Dendritic cell treated with granulocyte-macrophage colony-stimulating factor and Interleukin-4, amounts not matched to agents 40 ng/mL and 50 ng/mL, for 4 days (primary cell): ENCODE measurements at regions of chr13 and their contacts with region 1.

Region 1: DNA sequence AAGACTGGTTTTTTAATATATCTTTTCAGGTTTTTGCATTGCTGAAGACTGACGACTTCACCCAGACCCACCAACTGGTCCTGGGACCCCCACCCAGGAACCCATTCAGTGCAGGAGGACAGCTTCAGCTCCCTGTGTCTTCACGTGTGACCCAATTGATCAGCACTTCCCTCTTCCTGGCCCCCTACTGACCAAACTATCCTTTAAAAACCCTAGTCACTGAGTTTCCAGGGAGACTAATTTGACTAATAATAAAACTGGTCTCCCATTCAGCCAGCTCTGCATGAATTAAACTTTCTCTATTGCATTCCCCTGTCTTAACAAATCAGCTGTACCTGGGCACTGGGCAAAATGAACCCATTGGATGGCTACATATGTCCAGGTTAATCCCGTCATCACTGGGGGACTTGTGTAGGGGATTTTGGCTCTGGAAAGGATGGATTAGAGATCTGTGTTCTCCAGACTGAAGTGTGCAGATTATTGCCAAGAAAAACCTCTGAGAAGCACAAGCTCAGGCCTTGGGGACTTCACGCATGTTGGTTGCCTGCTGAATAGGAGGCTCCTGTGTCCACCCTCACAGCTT is 16.3 kb upstream of the PARP4 start:
- H3K4me3 Mint-ChIP-seq: no peak overlapping the region
- H3K27ac Mint-ChIP-seq: no peak overlapping the region
- H3K4me1 Mint-ChIP-seq: no peaks in the 10 kb centered on the region
- H3K27me3 Mint-ChIP-seq: peaks cover 25% of the 10 kb centered on the region

Region 2: GRCh38 chr13:24784319-24784718 is 255.4 kb after region 1 on chr13:
- intact Hi-C with region 1: no loop called
- H3K4me3 Mint-ChIP-seq: no peak overlapping the region
- H3K27ac Mint-ChIP-seq: no peak overlapping the region
- H3K4me1 Mint-ChIP-seq: no peaks in the 10 kb centered on the region
- H3K27me3 Mint-ChIP-seq: no peaks in the 10 kb centered on the region

Region 3: DNA sequence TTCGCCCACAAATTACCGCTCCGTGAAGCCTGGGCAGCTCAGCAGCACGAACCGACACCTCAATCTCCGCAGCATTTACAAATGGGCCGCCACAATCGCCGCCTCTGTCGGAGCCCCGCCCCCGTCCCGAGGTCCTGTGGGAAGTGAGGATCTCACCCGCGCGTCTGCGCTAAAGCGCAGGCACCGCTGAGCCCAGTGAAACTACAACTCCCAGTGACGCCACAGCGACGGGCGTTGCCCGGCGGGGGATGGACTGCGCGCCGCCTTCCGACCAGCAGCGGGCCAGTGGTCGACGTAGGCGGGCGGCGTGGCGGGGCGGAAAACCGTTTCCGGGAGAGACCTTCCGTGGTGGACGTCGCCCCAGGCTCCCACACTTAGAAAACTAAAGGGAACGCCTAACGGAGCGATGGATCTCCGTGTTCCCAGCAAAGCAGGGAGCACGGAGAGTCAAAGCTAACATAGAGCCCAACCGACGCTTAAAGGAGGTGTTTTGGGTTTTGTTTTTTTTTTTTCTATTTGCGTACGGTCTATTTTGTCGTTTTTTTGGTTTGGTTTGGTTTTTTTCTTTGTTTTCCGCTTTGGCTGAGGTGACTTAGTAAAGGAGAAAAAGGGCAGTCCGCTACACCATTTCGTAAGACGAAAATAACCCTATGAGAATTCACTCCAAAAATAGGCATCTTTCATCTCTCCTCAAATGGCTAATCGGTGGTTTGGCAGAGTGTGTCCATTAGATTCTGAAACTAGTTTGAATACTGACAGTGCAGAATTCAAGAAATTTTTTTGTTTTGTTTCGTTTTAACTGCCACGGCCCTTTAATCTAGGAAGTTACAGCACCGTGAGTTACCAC is 394.1 kb after region 1 on chr13:
- intact Hi-C with region 1: loop called (anchors 10 kb)
- H3K4me3 Mint-ChIP-seq: peak overlapping the region; percentile 99
- H3K27ac Mint-ChIP-seq: peak overlapping the region; percentile 99
- H3K4me1 Mint-ChIP-seq: no peaks in the 10 kb centered on the region
- H3K27me3 Mint-ChIP-seq: no peaks in the 10 kb centered on the region